CD14-positive monocyte (primary cell): ENCODE measurements at regions of chr6 and their contacts with region 1.

Region 1: GRCh38 chr6:80903711-80904110 is 797.2 kb downstream of the BCKDHB start:
- DNase-seq: no peak
- H3K4me3 ChIP-seq: no peak overlapping the region
- H3K4me3 Mint-ChIP-seq: no peak overlapping the region
- H3K27ac ChIP-seq: no peak overlapping the region
- H3K27ac Mint-ChIP-seq: no peak overlapping the region
- H3K4me1 ChIP-seq: no peaks in the 10 kb centered on the region
- H3K4me1 Mint-ChIP-seq: no peaks in the 10 kb centered on the region
- H3K27me3 ChIP-seq: no peaks in the 10 kb centered on the region
- H3K27me3 Mint-ChIP-seq: no peaks in the 10 kb centered on the region
- CTCF ChIP-seq: no peak

Region 2: DNA sequence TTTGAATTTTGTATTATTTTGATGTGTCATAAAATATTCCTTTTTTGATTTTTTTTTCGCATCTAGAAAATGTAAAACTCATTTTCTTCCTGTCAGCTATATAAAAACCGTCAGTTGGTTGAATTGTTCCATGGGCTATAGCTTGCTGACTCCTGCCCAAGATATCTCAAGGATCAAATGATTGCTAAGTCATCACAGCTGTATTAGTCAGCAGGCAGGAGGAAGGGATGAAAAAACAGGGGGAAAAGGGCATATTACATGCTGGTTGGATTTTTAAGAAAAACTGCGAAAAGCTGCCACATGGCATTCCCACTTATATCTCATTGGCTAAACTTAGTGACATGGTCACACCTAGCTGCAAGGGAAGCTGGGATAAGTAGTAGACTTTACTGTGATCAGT is 227.3 kb before region 1 on chr6:
- intact Hi-C with region 1: no loop called
- DNase-seq: no peak
- H3K4me3 ChIP-seq: no peak overlapping the region
- H3K4me3 Mint-ChIP-seq: no peak overlapping the region
- H3K27ac ChIP-seq: no peak overlapping the region
- H3K27ac Mint-ChIP-seq: no peak overlapping the region
- H3K4me1 ChIP-seq: no peaks in the 10 kb centered on the region
- H3K4me1 Mint-ChIP-seq: no peaks in the 10 kb centered on the region
- H3K27me3 ChIP-seq: no peaks in the 10 kb centered on the region
- H3K27me3 Mint-ChIP-seq: no peaks in the 10 kb centered on the region
- CTCF ChIP-seq: no peak

Region 3: GRCh38 chr6:80886475-80886874 is 17.2 kb before region 1 on chr6:
- intact Hi-C with region 1: no loop called
- DNase-seq: no peak
- H3K4me3 ChIP-seq: no peak overlapping the region
- H3K4me3 Mint-ChIP-seq: no peak overlapping the region
- H3K27ac ChIP-seq: no peak overlapping the region
- H3K27ac Mint-ChIP-seq: no peak overlapping the region
- H3K4me1 ChIP-seq: no peaks in the 10 kb centered on the region
- H3K4me1 Mint-ChIP-seq: no peaks in the 10 kb centered on the region
- H3K27me3 ChIP-seq: no peaks in the 10 kb centered on the region
- H3K27me3 Mint-ChIP-seq: no peaks in the 10 kb centered on the region
- CTCF ChIP-seq: no peak

Region 4: GRCh38 chr6:80969439-80969838 is 65.7 kb after region 1 on chr6:
- intact Hi-C with region 1: no loop called
- DNase-seq: no peak
- H3K4me3 ChIP-seq: no peak overlapping the region
- H3K4me3 Mint-ChIP-seq: no peak overlapping the region
- H3K27ac ChIP-seq: no peak overlapping the region
- H3K27ac Mint-ChIP-seq: no peak overlapping the region
- H3K4me1 ChIP-seq: no peaks in the 10 kb centered on the region
- H3K4me1 Mint-ChIP-seq: no peaks in the 10 kb centered on the region
- H3K27me3 ChIP-seq: no peaks in the 10 kb centered on the region
- H3K27me3 Mint-ChIP-seq: no peaks in the 10 kb centered on the region
- CTCF ChIP-seq: no peak

Region 5: GRCh38 chr6:81086991-81087390 is 183.3 kb after region 1 on chr6:
- intact Hi-C with region 1: no loop called
- DNase-seq: no peak
- H3K4me3 ChIP-seq: no peak overlapping the region
- H3K4me3 Mint-ChIP-seq: no peak overlapping the region
- H3K27ac ChIP-seq: no peak overlapping the region
- H3K27ac Mint-ChIP-seq: no peak overlapping the region
- H3K4me1 ChIP-seq: no peaks in the 10 kb centered on the region
- H3K4me1 Mint-ChIP-seq: no peaks in the 10 kb centered on the region
- H3K27me3 ChIP-seq: no peaks in the 10 kb centered on the region
- H3K27me3 Mint-ChIP-seq: peaks cover 0 to 2% (median 0%) of the 10 kb centered on the region in 3 donors
- CTCF ChIP-seq: no peak

Region 6: GRCh38 chr6:81496003-81496402 is 592.3 kb after region 1 on chr6:
- intact Hi-C with region 1: loop called in 1 of 2 experiments (anchors 5 kb)
- DNase-seq: no peak
- H3K4me3 ChIP-seq: no peak overlapping the region
- H3K4me3 Mint-ChIP-seq: no peak overlapping the region
- H3K27ac ChIP-seq: no peak overlapping the region
- H3K27ac Mint-ChIP-seq: no peak overlapping the region
- H3K4me1 ChIP-seq: no peaks in the 10 kb centered on the region
- H3K4me1 Mint-ChIP-seq: no peaks in the 10 kb centered on the region
- H3K27me3 ChIP-seq: no peaks in the 10 kb centered on the region
- H3K27me3 Mint-ChIP-seq: peaks cover 0 to 2% (median 0%) of the 10 kb centered on the region in 3 donors
- CTCF ChIP-seq: no peak